ENCODE measurements at regions of chr22 and their contacts with region 1.

Region 1: DNA sequence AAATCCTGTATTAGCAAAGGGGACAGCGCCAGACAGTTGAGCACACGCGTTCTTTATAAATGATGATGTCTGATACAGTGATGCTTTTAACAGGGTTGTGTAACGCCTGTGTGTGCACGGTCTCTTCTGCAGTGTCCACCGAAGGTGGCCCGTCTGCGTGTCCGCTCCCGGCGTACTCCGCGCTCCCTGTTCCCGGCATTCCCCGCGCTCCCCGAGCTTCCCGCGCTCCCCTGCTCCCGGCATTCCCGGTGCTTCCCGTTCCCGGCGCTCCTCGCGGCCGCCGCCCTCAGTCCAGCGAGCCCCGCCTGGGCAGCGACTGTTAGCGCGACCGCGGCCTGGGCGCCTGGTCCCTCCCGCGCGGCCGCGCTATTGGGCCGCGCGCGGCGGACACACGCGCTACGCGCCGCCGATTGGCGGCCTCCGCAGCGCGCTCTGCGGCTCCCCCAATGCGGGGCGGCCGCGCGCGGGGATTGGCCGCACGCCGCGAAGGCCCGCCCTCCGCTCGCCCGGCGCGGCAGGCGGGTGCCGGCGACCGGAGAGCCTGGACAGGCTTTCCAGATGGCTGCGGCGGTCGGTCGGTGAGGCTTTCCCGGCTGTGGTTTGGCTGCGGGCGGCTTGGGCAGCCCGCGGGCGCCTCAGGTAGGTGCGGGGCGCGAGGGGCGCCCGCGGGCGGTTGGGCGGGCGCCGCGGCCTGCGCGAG is at the start of gene DGCR8:
- DNase-seq: peak; percentile 94
- H3K4me3 ChIP-seq: peak within 1 kb of the TSS; percentile 78 to 89 (median 82)
- H3K27ac ChIP-seq: peak within 1 kb of the TSS; percentile 87 to 96 (median 92)
- H3K4me1 ChIP-seq: peaks cover 45 to 51% (median 50%) of the 10 kb centered on the region in 4 donors
- H3K27me3 ChIP-seq: no peaks in the 10 kb centered on the region
- CTCF ChIP-seq: peak in 1 of 3 experiments; percentile 21
- EP300 ChIP-seq: no peak
- POLR2A ChIP-seq: no peak
- total RNA-seq, gene DGCR8: 16.9 to 26.6 (median 19.6) TPM

Region 2: DNA sequence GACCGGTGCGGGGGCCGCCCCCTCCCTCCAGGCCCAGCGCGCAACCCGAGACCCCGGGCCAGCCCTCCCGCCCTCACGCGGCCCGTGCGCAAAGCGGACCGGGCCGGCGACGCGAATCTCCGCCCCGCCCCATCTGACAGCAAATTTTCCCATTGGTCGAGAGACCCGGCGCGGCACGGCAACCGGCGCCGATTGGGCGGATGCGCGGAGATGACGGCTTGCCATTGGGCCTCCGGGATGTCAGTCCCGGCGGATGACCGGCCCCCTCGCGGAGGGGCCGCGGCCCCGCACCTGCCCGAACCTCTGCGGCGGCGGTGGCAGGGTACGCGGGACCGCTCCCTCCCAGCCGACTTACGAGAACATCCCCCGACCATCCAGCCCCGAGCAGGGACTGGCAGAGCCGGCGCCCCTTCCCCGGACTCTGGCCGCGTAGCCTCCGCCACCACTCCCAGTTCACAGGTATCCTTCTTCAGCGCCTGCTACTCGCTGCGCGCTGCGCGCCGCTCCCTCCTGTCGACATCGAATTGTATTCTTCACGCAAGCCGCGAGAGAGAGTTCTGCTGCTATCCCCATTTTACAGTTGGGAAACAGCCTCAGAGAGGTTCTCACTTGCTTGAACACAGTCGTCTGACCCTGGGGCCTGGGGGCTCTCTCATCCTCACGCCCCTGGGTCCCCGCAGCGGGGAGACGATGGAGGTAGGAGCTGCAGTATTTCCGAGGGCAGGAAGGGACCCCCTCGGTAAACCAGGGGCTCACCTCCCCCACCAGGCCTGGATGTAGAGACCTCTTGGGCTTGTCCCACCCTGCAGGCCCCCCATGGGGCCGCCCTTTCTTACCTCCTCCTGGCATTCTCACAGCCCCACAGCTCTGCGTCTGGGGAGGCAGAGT is 62.9 kb before region 1 on chr22 and contains the start of gene ARVCF:
- intact Hi-C with region 1: loop called (anchors 5 kb)
- DNase-seq: peak; percentile 96
- H3K4me3 ChIP-seq: peak within 1 kb of the TSS; percentile 75 to 88 (median 84)
- H3K27ac ChIP-seq: peak within 1 kb of the TSS; percentile 40 to 65 (median 58)
- H3K4me1 ChIP-seq: peaks cover 31 to 66% (median 46%) of the 10 kb centered on the region in 4 donors
- H3K27me3 ChIP-seq: no peaks in the 10 kb centered on the region
- CTCF ChIP-seq: peak; percentile 20 to 44 (median 41)
- EP300 ChIP-seq: no peak
- POLR2A ChIP-seq: no peak
- total RNA-seq, gene ARVCF: 31.1 to 55.8 (median 44.6) TPM